ENCODE measurements at regions of chr17 and their contacts with region 1.

Region 1: GRCh38 chr17:21214015-21214776 is at the start of gene TMEM11:
- DNase-seq: peak; percentile 97
- H3K4me3 ChIP-seq: peak within 1 kb of the TSS; percentile 97
- H3K27ac ChIP-seq: peak within 1 kb of the TSS; percentile 60
- H3K4me1 ChIP-seq: peaks cover 27% of the 10 kb centered on the region
- CTCF ChIP-seq: peak; percentile 41; the same call in 1 of the 2 replicates
- total RNA-seq, gene TMEM11: 26.8 and 27.3 TPM in 2 replicates

Region 2: DNA sequence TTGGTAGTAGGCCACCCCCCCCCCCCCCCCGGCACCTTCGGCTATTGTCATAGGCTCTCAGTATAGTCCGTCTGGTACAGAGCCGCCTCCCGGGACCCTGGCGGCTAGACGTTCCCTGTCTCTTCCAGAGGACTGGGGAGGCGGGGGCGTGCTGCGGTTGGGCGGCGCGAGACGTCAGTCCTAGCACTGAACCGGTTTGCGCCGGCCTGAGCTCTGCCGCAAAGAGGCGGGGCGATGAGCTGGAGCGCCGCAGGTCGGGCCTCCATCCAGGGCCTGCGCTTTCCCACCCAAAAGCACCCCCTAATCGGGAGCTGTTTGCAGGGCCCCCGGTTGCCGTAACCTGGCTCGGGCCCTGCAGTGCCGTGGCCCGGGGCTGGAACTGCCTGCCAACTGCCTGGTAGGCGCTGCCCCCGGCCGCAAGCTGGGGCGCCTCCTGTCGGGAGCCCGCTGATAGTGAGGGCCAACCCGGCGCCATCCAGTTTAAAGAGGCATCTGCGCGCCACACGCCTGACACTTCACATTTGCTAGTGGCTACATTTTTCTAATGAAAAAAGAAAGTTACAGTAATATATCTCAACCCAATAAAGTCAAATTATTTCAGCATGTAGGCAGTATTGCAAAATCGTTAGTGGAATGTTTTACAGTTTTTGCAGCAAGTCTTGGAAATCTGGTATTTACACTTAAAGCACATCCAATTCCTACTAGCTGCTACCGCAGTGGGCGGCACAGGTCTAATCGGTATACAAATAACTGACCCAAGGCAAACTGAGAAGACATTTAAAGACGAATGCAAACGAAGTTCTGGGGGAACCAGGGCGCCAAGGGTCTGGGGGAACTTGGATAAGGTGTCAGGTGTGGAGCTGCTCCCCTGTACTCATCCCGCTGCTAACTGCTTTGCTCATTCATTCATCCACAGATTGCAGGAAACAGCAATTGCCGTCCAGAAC is 170.6 kb before region 1 on chr17:
- CTCF ChIA-PET with region 1: no interaction called
- POLR2A ChIA-PET with region 1: interaction called, 3 read pairs
- intact Hi-C with region 1: loop called (anchors 2 kb)
- DNase-seq: peak; percentile 39
- H3K4me3 ChIP-seq: peak overlapping the region; percentile 66
- H3K27ac ChIP-seq: peak overlapping the region; percentile 86
- H3K4me1 ChIP-seq: peaks cover 30% of the 10 kb centered on the region
- CTCF ChIP-seq: peak; percentile 94

Region 3: DNA sequence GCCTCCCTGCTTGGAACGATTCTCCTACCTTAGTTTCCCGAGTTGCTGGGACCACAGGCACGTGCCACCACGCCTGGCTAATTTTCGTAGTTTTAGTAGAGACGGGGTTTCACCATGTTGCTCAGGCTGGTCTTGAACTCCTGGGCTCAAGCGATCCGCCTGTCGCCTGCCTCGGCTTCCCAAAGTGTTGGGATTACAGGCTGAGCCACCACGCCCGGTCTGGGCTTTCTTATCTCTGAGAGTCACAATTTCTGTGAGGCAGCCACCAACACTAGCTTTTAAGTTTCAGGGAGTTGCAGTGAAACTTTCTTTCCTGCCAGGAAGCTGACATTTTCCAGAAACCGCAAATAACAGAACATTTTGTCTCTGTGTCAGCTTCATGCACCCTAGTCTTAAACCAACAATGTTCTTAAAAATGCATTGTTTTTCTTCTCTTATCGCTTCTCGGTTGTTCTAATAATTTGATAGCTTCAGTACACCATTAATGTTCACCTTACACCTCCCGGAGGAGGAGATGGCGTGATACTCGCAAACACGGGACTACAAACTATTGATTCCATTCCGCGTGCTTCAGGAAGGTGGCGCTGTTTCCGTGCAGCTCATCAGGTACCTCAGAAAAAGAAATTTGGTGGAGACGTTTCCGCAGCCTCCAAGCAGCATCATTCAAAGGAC is 94.8 kb before region 1 on chr17:
- CTCF ChIA-PET with region 1: interaction called, 4 read pairs
- POLR2A ChIA-PET with region 1: no interaction called
- intact Hi-C with region 1: loop called (anchors 2 kb)
- DNase-seq: peak; percentile 81
- H3K4me3 ChIP-seq: no peak overlapping the region
- H3K27ac ChIP-seq: no peak overlapping the region
- H3K4me1 ChIP-seq: peaks cover 4% of the 10 kb centered on the region
- CTCF ChIP-seq: peak; percentile 94

Region 4: GRCh38 chr17:21126645-21127510 is 87.3 kb before region 1 on chr17 and contains the start of gene DHRS7B:
- CTCF ChIA-PET with region 1: no interaction called
- POLR2A ChIA-PET with region 1: no interaction called
- intact Hi-C with region 1: loop called (anchors 2 kb)
- DNase-seq: peak; percentile 98
- H3K4me3 ChIP-seq: peak within 1 kb of the TSS; percentile 81
- H3K27ac ChIP-seq: peak within 1 kb of the TSS; percentile 68
- H3K4me1 ChIP-seq: peaks cover 19% of the 10 kb centered on the region
- CTCF ChIP-seq: peak; percentile 16; the same call in 1 of the 2 replicates
- total RNA-seq, gene DHRS7B: 11.6 and 16.0 TPM in 2 replicates

Region 5: DNA sequence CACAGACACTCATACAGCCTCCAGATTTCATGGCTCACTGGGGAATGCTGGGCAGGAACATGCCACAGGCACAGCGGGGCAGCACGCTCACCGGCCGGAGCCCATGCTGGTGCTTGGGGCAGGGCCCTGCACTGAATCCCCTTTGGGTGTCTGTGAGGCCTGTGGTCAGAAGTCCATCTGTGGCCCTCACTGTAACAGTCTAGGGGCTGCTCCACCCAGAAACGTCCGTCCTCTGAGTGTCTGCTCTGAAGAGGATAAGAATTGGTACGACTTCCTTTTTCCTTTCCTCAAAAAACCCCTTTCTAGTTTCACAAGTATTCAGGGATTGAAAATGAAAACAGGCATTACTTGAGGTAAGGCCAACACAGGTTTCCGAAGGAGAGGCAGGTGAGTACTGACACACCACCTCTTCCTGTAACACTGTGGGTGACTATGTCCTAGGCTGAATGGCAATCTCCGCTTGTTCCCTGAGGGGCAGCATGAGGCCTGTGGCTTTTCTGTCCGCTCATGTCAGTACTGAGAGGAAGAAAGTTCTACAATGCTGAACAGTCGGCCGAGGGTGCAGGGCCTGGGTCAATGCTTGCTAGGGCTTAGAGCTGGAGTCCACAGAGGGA is 42.8 kb before region 1 on chr17:
- CTCF ChIA-PET with region 1: no interaction called
- POLR2A ChIA-PET with region 1: no interaction called
- intact Hi-C with region 1: no loop called
- DNase-seq: no peak
- H3K4me3 ChIP-seq: no peak overlapping the region
- H3K27ac ChIP-seq: no peak overlapping the region
- H3K4me1 ChIP-seq: no peaks in the 10 kb centered on the region
- CTCF ChIP-seq: no peak

Region 6: DNA sequence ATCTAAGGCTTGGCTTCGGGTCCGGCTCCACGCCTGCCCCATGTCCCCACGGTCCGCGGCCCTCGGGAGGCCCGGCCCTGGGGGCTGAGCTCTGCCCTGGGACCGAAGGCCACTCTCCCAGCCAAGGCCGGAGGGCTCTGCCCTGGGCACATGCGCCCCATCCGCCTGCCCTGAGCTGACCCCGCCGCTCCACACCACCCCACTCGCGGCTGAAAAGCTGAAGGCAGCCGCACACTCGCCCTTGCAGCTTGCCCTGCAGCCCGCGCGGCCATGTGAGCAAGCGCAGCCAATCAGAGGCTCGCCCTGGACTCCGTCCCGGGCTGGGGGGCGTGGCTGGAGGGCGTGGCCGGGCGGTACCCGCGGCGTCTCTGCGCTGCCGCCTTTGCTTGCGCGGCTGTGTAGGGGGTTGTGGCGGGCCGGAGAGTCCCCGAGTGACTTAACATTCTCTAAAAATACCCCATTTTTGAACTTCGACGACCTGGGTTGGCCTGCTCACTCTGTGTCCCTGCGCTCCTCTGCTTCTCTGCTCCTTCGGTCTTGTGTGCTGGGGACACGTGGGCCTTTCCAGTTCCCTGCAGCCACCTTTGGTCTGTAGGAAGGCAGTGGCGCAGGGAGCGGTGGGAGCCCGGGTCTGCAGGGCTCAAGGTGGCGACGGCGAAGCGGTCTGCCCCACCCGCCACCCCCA is 61.5 kb after region 1 on chr17:
- CTCF ChIA-PET with region 1: no interaction called
- POLR2A ChIA-PET with region 1: no interaction called
- intact Hi-C with region 1: loop called (anchors 1 kb)
- DNase-seq: peak; percentile 94
- H3K4me3 ChIP-seq: peak overlapping the region; percentile 71
- H3K27ac ChIP-seq: no peak overlapping the region
- H3K4me1 ChIP-seq: peaks cover 61% of the 10 kb centered on the region
- CTCF ChIP-seq: 0 out of 2 replicates have a peak, but pooled peaks have one; percentile 24